Transverse colon (tissue), 4 donors: ENCODE measurements at regions of chr4 and their contacts with region 1.

Region 1: GRCh38 chr4:185471235-185472102 is at the start of gene CCDC110:
- DNase-seq: peak; percentile 98
- H3K4me3 ChIP-seq: peak within 1 kb of the TSS; percentile 62 to 83 (median 74)
- H3K27ac ChIP-seq: peak within 1 kb of the TSS; percentile 69 to 78 (median 75)
- H3K4me1 ChIP-seq: peaks cover 0 to 14% (median 8%) of the 10 kb centered on the region in 4 donors
- H3K27me3 ChIP-seq: no peaks in the 10 kb centered on the region
- CTCF ChIP-seq: peak; percentile 30 to 84 (median 57)
- EP300 ChIP-seq: no peak
- POLR2A ChIP-seq: no peak
- total RNA-seq, gene CCDC110: 2.5 to 3.0 TPM in 2 of 4 donors, not detected in the others

Region 2: GRCh38 chr4:184825896-184826690 is 645.4 kb before region 1 on chr4 and contains the start of gene ACSL1:
- in situ Hi-C with region 1: no loop called
- intact Hi-C with region 1: no loop called
- DNase-seq: peak; percentile 76
- H3K4me3 ChIP-seq: peak within 1 kb of the TSS; percentile 69 to 85 (median 74)
- H3K27ac ChIP-seq: peak within 1 kb of the TSS; percentile 82 to 83 (median 82)
- H3K4me1 ChIP-seq: peaks cover 0 to 22% (median 11%) of the 10 kb centered on the region in 4 donors
- H3K27me3 ChIP-seq: no peaks in the 10 kb centered on the region
- CTCF ChIP-seq: no peak
- EP300 ChIP-seq: no peak
- POLR2A ChIP-seq: peak; percentile 37
- total RNA-seq, gene ACSL1: 20.6 to 50.0 (median 40.0) TPM

Region 3: GRCh38 chr4:185445209-185445608 is 26.3 kb before region 1 on chr4:
- in situ Hi-C with region 1: no loop called
- intact Hi-C with region 1: no loop called
- DNase-seq: no peak
- H3K4me3 ChIP-seq: no peak overlapping the region
- H3K27ac ChIP-seq: no peak overlapping the region
- H3K4me1 ChIP-seq: no peaks in the 10 kb centered on the region
- H3K27me3 ChIP-seq: no peaks in the 10 kb centered on the region
- CTCF ChIP-seq: no peak
- EP300 ChIP-seq: no peak
- POLR2A ChIP-seq: no peak

Region 4: DNA sequence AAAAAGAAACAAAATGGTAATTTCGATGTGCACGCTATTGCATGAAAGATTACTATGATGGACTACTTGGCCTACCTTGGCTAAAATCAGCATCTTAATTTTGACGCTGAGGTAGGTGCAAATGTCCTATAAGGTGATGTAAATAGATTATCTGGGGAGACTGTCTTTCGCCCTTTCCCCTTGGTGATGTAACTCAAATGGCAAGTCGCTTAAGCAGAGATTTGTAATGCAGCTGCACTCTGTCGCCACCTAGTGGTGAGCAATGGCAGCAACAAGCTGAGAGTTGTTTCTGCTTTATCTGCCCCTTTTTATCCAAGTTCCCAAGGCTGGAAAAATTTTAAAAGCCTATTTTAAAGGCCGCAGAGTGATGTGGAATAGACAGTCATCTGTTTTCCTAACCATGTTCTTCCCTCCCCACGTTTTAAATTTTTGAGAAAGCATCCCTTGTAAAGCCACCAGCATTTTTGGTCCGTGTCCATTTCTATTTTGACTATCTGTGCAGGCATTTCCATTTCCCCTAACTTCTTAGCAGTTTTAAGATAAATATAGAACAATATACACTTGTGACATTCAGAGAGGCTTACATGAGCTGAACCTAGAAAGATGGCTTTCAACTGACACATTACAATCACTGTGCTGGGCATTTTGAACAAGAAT is 126.2 kb after region 1 on chr4:
- in situ Hi-C with region 1: loop called in 1 of 4 experiments (anchors 10 kb)
- intact Hi-C with region 1: loop called (anchors 1 kb)
- DNase-seq: peak; percentile 74
- H3K4me3 ChIP-seq: no peak overlapping the region
- H3K27ac ChIP-seq: peak overlapping the region in 3 of 4 donors; percentile 49 to 70 (median 65)
- H3K4me1 ChIP-seq: no peaks in the 10 kb centered on the region
- H3K27me3 ChIP-seq: no peaks in the 10 kb centered on the region
- CTCF ChIP-seq: peak; percentile 96 to 99 (median 99)
- EP300 ChIP-seq: no peak
- POLR2A ChIP-seq: no peak

Region 5: GRCh38 chr4:186634591-186635128 is 1163.2 kb after region 1 on chr4:
- in situ Hi-C with region 1: no loop called
- intact Hi-C with region 1: loop called (anchors 5 kb)
- DNase-seq: no peak
- H3K4me3 ChIP-seq: no peak overlapping the region
- H3K27ac ChIP-seq: no peak overlapping the region
- H3K4me1 ChIP-seq: no peaks in the 10 kb centered on the region
- H3K27me3 ChIP-seq: no peaks in the 10 kb centered on the region
- CTCF ChIP-seq: no peak
- EP300 ChIP-seq: no peak
- POLR2A ChIP-seq: no peak